ENCODE measurements at regions of chr20 and their contacts with region 1.

Region 1: GRCh38 chr20:40945754-40946450 is 82.7 kb upstream of the TOP1 start:
- DNase-seq: no peak
- ATAC-seq: no peak
- H3K4me3 ChIP-seq: no peak overlapping the region
- H3K4me3 Mint-ChIP-seq: no peak overlapping the region
- H3K27ac ChIP-seq: no peak overlapping the region
- H3K27ac Mint-ChIP-seq: no peak overlapping the region
- H3K4me1 ChIP-seq: no peaks in the 10 kb centered on the region
- H3K4me1 Mint-ChIP-seq: peaks cover 0 to 2% (median 0%) of the 10 kb centered on the region in 7 donors
- H3K27me3 ChIP-seq: no peaks in the 10 kb centered on the region
- H3K27me3 Mint-ChIP-seq: peaks cover 0 to 12% (median 7%) of the 10 kb centered on the region in 5 donors

Region 2: GRCh38 chr20:40741507-40742106 is 204.3 kb before region 1 on chr20:
- CTCF ChIA-PET with region 1: no interaction called
- POLR2A ChIA-PET with region 1: no interaction called
- intact Hi-C with region 1: loop called in 1 of 2 experiments (anchors 5 kb)
- DNase-seq: peak in 3 of 9 donors; percentile 4 to 40 (median 12)
- ATAC-seq: peak; percentile 64
- H3K4me3 ChIP-seq: no peak overlapping the region
- H3K4me3 Mint-ChIP-seq: no peak overlapping the region
- H3K27ac ChIP-seq: no peak overlapping the region
- H3K27ac Mint-ChIP-seq: no peak overlapping the region
- H3K4me1 ChIP-seq: no peaks in the 10 kb centered on the region
- H3K4me1 Mint-ChIP-seq: peaks cover 0 to 5% (median 0%) of the 10 kb centered on the region in 7 donors
- H3K27me3 ChIP-seq: no peaks in the 10 kb centered on the region
- H3K27me3 Mint-ChIP-seq: peaks cover 0 to 14% (median 8%) of the 10 kb centered on the region in 5 donors

Region 3: DNA sequence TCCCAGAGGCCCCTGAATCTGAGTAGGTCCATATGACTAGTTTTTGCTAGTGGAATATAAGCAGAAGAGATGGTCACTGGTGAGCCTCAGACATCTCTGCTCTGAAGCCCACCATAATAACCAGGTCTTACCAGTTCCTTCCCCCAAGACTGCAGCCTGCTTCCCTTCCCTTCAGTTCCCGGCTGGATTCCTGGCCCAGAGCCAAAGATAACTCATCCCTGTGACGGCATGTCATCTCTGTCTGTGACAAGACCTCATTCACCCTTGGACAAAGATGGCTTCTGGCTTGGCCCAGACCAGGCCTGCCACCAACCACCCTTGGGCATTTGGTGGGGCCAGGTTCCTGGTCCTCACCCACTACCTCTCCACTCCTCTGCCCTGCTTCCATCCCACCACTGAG is 62.8 kb before region 1 on chr20:
- CTCF ChIA-PET with region 1: no interaction called
- POLR2A ChIA-PET with region 1: no interaction called
- intact Hi-C with region 1: no loop called
- DNase-seq: no peak
- ATAC-seq: no peak
- H3K4me3 ChIP-seq: no peak overlapping the region
- H3K4me3 Mint-ChIP-seq: peak overlapping the region in 5 of 10 donors; percentile 13 to 59 (median 21)
- H3K27ac ChIP-seq: no peak overlapping the region
- H3K27ac Mint-ChIP-seq: peak overlapping the region in 3 of 9 donors; percentile 30 to 73 (median 69)
- H3K4me1 ChIP-seq: peaks cover 16 to 18% of the 10 kb centered on the region in 2 donors
- H3K4me1 Mint-ChIP-seq: peaks cover 9 to 35% (median 27%) of the 10 kb centered on the region in 7 donors
- H3K27me3 ChIP-seq: no peaks in the 10 kb centered on the region
- H3K27me3 Mint-ChIP-seq: peaks cover 0 to 2% (median 0%) of the 10 kb centered on the region in 5 donors

Measured in naive thymus-derived CD4-positive, alpha-beta T cell (primary cell).